ENCODE measurements at regions of chr3 and their contacts with region 1.

Region 1: GRCh38 chr3:107235928-107236315 is 141.3 kb upstream of the CCDC54 start:
- DNase-seq: no peak
- ATAC-seq: peak; percentile 60
- H3K4me3 Mint-ChIP-seq: peak overlapping the region; percentile 3
- H3K27ac Mint-ChIP-seq: no peak overlapping the region
- H3K4me1 Mint-ChIP-seq: peaks cover 10% of the 10 kb centered on the region
- H3K27me3 Mint-ChIP-seq: peaks cover 3% of the 10 kb centered on the region
- CTCF ChIP-seq: peak; percentile 83

Region 2: DNA sequence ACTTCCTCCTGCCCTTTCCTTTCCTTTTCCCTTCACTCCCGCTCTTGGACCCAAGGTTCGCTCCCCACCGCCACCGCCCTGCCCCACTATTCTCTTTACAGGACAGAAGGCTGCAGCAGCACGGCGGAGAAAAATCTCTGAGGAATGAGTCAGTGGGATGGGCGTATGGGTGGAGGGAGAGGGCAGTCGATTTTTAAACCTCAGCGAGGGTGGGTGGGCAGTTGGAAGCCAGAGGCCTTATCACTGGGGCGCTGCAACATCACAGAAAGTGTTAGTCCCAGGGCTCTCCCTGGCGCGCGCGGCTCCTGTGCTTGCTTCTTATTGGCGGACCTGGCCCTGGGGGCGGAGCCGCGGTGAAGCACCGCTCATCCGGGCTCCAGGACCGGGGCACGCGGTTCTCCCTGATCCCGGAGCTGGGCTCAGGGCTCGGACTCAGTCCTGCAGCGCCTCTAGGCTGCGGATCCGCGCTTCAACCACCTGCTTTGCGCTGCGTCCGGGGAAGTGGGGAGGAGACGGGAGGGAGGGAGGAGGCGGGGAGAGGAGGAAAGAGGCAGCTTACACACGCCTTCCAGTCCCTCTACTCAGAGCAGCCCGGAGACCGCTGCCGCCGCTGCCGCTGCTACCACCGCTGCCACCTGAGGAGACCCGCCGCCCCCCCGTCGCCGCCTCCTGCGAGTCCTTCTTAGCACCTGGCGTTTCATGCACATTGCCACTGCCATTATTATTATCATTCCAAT is 1869.4 kb before region 1 on chr3 and contains the start of gene ALCAM:
- CTCF ChIA-PET with region 1: no interaction called
- POLR2A ChIA-PET with region 1: no interaction called
- intact Hi-C with region 1: loop called (anchors 2 kb)
- DNase-seq: peak; percentile 80
- ATAC-seq: peak; percentile 62
- H3K4me3 Mint-ChIP-seq: peak within 1 kb of the TSS; percentile 97
- H3K27ac Mint-ChIP-seq: peak within 1 kb of the TSS; percentile 99
- H3K4me1 Mint-ChIP-seq: peaks cover 33% of the 10 kb centered on the region
- H3K27me3 Mint-ChIP-seq: no peaks in the 10 kb centered on the region
- CTCF ChIP-seq: no peak
- total RNA-seq, gene ALCAM: 27.6 and 28.5 TPM in 2 replicates

Region 3: GRCh38 chr3:107172411-107172810 is 63.5 kb before region 1 on chr3:
- CTCF ChIA-PET with region 1: no interaction called
- POLR2A ChIA-PET with region 1: no interaction called
- intact Hi-C with region 1: no loop called
- DNase-seq: no peak
- ATAC-seq: no peak
- H3K4me3 Mint-ChIP-seq: no peak overlapping the region
- H3K27ac Mint-ChIP-seq: no peak overlapping the region
- H3K4me1 Mint-ChIP-seq: no peaks in the 10 kb centered on the region
- H3K27me3 Mint-ChIP-seq: no peaks in the 10 kb centered on the region
- CTCF ChIP-seq: no peak

Region 4: DNA sequence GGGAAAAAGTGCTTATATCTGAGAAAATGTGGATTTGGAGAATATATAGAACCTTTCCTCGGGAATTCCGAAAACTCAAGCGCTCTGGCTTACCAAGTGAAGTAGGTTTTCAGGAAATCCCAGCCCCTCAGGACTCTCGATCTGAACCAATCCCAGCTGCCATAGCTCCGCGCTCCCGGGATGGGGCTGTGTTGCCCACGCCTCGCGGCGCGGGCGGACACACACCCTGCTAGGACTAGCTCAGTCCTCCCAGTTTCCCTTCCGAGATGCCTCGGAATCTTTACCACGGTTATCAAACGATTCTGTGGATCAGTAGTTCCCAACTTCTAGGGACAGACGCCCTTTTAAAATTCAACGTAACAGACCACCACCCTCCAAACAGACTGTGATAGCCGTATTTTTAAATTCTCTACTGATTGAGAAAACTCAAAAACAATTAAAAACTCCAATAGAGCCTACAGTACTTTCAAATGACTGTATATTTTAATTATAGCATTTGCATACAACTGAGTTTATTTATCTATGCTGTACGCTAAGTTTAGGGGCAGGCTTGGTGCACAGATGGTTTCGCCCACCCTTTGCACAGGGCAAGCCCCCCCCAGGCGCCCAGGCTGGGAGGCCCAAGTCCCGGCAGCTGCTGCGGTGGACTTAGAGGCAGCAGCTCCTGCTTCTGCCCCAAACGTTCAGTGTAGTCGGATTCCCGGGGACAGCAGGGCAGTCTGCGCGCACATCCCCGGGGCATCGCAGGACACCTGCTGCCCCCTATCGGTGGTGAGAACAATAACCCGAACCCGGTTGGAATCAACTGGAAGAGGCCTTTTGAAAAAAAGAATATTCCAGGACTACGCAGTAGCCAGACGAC is 193.6 kb after region 1 on chr3:
- CTCF ChIA-PET with region 1: interaction called, 22 read pairs
- POLR2A ChIA-PET with region 1: no interaction called
- intact Hi-C with region 1: loop called (anchors 1 kb)
- DNase-seq: peak; percentile 59
- ATAC-seq: peak; percentile 56
- H3K4me3 Mint-ChIP-seq: peak overlapping the region; percentile 89
- H3K27ac Mint-ChIP-seq: peak overlapping the region; percentile 77
- H3K4me1 Mint-ChIP-seq: peaks cover 58% of the 10 kb centered on the region
- H3K27me3 Mint-ChIP-seq: no peaks in the 10 kb centered on the region
- CTCF ChIP-seq: peak; percentile 83

Region 5: DNA sequence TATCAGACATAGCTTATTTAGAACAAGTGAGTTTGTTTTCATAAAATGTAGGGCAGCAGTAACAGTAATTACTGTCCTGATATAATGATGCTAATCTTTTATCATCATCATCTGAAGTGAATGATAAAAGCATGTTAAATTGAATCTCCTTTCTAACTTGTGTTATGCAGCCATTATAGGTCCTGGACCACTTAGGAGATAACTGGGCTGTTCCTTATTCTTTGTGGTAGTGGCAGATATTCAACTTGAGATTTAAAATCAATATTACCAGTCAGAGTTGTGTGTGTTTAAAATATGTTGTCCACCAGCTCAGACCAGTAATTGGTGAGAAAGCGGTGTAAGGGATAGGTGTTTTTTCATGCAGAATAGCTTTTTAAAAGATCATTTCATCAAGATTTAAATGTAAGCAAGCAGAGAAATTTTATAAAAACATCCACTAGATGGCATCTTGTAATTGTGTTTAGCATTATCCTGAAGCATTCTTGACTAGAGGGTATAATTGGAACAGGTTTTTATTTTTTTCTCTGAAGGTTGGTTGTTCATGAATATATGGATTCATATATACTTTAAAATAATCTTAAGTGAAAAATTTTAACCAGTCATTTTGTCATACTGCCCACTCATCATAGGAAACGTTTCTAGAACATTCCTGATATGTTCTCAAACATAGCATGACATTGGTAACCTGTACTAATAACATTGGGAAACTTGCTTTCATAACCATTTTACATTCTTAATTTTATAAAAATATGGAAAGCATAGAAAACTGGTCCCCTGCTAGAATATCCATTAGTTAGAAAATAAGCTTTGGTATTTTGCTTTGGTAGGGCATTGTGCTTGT is 440.8 kb after region 1 on chr3:
- CTCF ChIA-PET with region 1: interaction called, 10 read pairs
- POLR2A ChIA-PET with region 1: no interaction called
- intact Hi-C with region 1: loop called (anchors 2 kb)
- DNase-seq: no peak
- ATAC-seq: no peak
- H3K4me3 Mint-ChIP-seq: peak overlapping the region; percentile 42
- H3K27ac Mint-ChIP-seq: peak overlapping the region; percentile 67
- H3K4me1 Mint-ChIP-seq: peaks cover 53% of the 10 kb centered on the region
- H3K27me3 Mint-ChIP-seq: no peaks in the 10 kb centered on the region
- CTCF ChIP-seq: no peak

Region 6: DNA sequence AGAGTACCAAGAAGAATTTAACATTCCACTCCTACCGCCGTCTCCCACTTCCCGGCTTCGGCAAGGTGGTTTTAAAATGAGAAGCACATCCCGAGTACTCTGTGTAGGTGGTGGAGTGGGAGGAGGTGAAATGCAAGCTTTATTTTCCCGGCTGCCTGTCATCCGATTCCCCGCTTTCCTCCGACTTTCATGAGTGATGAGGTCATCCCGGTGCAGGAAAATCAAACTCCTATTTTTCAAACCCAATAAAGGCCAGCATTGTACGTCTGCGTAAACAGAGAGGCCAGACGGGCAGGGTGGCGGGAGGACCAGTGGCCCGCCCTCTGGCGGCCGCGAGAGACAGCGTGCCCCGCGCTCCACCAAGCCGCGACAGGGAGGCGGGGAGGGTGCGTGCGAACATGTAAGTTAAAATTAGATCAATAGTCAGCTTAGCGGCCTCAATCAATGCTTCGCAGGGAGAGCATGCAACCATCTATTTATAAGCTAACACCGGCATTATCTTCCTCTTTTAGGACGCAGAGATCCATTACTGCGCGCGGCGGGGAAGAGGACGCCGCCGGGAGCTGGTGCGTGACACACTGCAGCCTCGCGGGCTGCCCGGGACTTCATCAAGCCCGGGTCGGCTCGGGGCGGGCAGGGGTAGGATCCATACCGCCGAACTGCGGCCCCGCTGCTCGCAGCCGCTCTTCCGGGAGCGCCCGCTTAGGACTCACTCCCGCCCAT is 691.6 kb after region 1 on chr3:
- CTCF ChIA-PET with region 1: interaction called, 16 read pairs
- POLR2A ChIA-PET with region 1: no interaction called
- intact Hi-C with region 1: loop called (anchors 1 kb)
- DNase-seq: peak; percentile 66
- ATAC-seq: peak; percentile 93
- H3K4me3 Mint-ChIP-seq: peak overlapping the region; percentile 86
- H3K27ac Mint-ChIP-seq: peak overlapping the region; percentile 26
- H3K4me1 Mint-ChIP-seq: peaks cover 22% of the 10 kb centered on the region
- H3K27me3 Mint-ChIP-seq: peaks cover 10% of the 10 kb centered on the region
- CTCF ChIP-seq: peak; percentile 97

Region 7: DNA sequence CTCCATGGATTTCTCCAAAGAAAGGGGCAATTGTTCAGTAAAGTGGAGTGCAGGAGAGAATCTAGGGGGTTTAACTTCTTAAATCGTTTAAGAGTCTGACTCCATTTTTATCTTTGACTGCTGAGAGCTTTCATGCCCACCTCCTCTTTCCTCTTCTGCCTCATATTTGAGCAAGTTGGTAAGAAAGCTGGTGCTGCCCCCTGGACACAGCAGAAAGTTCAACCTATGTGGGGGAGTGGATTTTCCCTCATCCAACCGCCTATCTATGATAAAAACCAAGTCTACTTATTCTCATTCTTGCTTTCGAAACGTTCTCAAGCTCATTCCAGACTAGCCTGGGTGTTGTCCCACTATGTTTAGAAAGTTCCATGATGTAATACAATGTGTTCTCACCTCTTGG is 1086.4 kb after region 1 on chr3:
- CTCF ChIA-PET with region 1: no interaction called
- POLR2A ChIA-PET with region 1: no interaction called
- intact Hi-C with region 1: loop called (anchors 2 kb)
- DNase-seq: no peak
- ATAC-seq: peak; percentile 91
- H3K4me3 Mint-ChIP-seq: no peak overlapping the region
- H3K27ac Mint-ChIP-seq: peak overlapping the region; percentile 57
- H3K4me1 Mint-ChIP-seq: peaks cover 14% of the 10 kb centered on the region
- H3K27me3 Mint-ChIP-seq: no peaks in the 10 kb centered on the region
- CTCF ChIP-seq: no peak

Region 8: GRCh38 chr3:108552267-108553159 is 1316.6 kb after region 1 on chr3:
- CTCF ChIA-PET with region 1: interaction called, 9 read pairs
- POLR2A ChIA-PET with region 1: no interaction called
- intact Hi-C with region 1: loop called (anchors 1 kb)
- DNase-seq: no peak
- ATAC-seq: peak; percentile 34
- H3K4me3 Mint-ChIP-seq: peak overlapping the region; percentile 26
- H3K27ac Mint-ChIP-seq: peak overlapping the region; percentile 77
- H3K4me1 Mint-ChIP-seq: peaks cover 8% of the 10 kb centered on the region
- H3K27me3 Mint-ChIP-seq: no peaks in the 10 kb centered on the region
- CTCF ChIP-seq: no peak

Measured in activated B cell treated with CpG ODN at 0.5 μM for 24 hours (primary cell).